ENCODE measurements at regions of chr2 and their contacts with region 1.

Region 1: GRCh38 chr2:11344342-11344955 is at the start of gene ROCK2:
- DNase-seq: peak; percentile 79
- ATAC-seq: peak; percentile 80
- H3K4me3 ChIP-seq: peak within 1 kb of the TSS; percentile 87
- H3K27ac ChIP-seq: peak within 1 kb of the TSS; percentile 98
- H3K4me1 ChIP-seq: peaks cover 5% of the 10 kb centered on the region; the same call in 1 of the 2 replicates
- H3K27me3 ChIP-seq: no peaks in the 10 kb centered on the region
- CTCF ChIP-seq: no peak
- POLR2A ChIP-seq: peak; percentile 60
- RAD21 ChIP-seq: no peak
- total RNA-seq, gene ROCK2: 28.3 and 59.7 TPM in 2 replicates

Region 2: GRCh38 chr2:11129598-11130449 is 214.6 kb before region 1 on chr2:
- CTCF ChIA-PET with region 1: interaction called, 10 read pairs
- POLR2A ChIA-PET with region 1: no interaction called
- dilution Hi-C with region 1: no loop called
- in situ Hi-C with region 1: no loop called
- intact Hi-C with region 1: loop called (anchors 2 kb)
- DNase-seq: no peak
- ATAC-seq: no peak
- H3K4me3 ChIP-seq: no peak overlapping the region
- H3K27ac ChIP-seq: no peak overlapping the region
- H3K4me1 ChIP-seq: peaks cover 14% of the 10 kb centered on the region
- H3K27me3 ChIP-seq: no peaks in the 10 kb centered on the region
- CTCF ChIP-seq: no peak
- POLR2A ChIP-seq: no peak
- RAD21 ChIP-seq: no peak

Region 3: DNA sequence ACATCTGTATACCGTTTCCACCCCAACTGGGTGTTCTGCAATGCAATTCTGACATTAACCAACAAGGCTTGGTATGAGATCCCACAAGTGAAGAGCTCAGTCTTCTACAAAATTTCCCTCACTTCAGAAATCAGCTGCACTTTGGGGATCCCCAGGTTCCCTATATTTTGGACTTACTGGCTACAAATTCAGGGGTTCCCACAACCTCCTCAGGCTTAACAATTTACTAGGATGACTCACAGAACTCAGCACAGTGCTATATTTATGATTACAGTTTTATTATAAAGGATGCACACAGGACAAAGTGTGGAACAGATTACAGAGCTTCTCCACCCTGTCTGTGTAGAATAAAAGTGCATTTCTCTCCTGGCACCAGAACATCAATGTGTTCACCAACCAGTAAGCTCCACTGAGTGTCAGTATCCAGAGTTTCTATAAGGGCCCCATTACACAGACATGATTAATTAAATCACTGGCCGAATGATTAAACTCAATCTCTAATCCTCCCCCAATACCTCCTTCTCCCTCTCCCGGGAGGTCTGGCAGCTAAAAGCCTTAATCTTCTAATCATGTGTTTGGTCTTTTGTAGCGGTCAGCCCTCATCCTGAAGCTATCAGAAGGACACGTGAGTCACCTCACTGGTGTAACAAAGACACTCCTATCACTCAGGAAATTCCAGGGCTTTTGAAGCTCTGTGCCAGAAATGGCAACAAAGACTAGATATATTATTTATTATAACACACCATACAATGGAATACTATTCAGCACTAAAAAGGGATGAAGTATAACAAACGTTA is 104.6 kb before region 1 on chr2:
- CTCF ChIA-PET with region 1: interaction called, 5 read pairs
- POLR2A ChIA-PET with region 1: no interaction called
- dilution Hi-C with region 1: no loop called
- in situ Hi-C with region 1: no loop called
- intact Hi-C with region 1: loop called (anchors 5 kb)
- DNase-seq: peak; percentile 25
- ATAC-seq: peak; percentile 56; the same call in 1 of the 2 replicates
- H3K4me3 ChIP-seq: no peak overlapping the region
- H3K27ac ChIP-seq: no peak overlapping the region
- H3K4me1 ChIP-seq: peaks cover 3% of the 10 kb centered on the region; the same call in 1 of the 2 replicates
- H3K27me3 ChIP-seq: no peaks in the 10 kb centered on the region
- CTCF ChIP-seq: no peak
- POLR2A ChIP-seq: no peak
- RAD21 ChIP-seq: no peak

Region 4: GRCh38 chr2:11305958-11306357 is 38.5 kb before region 1 on chr2:
- CTCF ChIA-PET with region 1: no interaction called
- POLR2A ChIA-PET with region 1: interaction called, 3 read pairs
- dilution Hi-C with region 1: no loop called
- in situ Hi-C with region 1: no loop called
- intact Hi-C with region 1: loop called (anchors 5 kb)
- DNase-seq: peak; percentile 92
- ATAC-seq: peak; percentile 95
- H3K4me3 ChIP-seq: no peak overlapping the region
- H3K27ac ChIP-seq: no peak overlapping the region
- H3K4me1 ChIP-seq: peaks cover 10% of the 10 kb centered on the region
- H3K27me3 ChIP-seq: no peaks in the 10 kb centered on the region
- CTCF ChIP-seq: no peak
- POLR2A ChIP-seq: no peak
- RAD21 ChIP-seq: no peak

Region 5: DNA sequence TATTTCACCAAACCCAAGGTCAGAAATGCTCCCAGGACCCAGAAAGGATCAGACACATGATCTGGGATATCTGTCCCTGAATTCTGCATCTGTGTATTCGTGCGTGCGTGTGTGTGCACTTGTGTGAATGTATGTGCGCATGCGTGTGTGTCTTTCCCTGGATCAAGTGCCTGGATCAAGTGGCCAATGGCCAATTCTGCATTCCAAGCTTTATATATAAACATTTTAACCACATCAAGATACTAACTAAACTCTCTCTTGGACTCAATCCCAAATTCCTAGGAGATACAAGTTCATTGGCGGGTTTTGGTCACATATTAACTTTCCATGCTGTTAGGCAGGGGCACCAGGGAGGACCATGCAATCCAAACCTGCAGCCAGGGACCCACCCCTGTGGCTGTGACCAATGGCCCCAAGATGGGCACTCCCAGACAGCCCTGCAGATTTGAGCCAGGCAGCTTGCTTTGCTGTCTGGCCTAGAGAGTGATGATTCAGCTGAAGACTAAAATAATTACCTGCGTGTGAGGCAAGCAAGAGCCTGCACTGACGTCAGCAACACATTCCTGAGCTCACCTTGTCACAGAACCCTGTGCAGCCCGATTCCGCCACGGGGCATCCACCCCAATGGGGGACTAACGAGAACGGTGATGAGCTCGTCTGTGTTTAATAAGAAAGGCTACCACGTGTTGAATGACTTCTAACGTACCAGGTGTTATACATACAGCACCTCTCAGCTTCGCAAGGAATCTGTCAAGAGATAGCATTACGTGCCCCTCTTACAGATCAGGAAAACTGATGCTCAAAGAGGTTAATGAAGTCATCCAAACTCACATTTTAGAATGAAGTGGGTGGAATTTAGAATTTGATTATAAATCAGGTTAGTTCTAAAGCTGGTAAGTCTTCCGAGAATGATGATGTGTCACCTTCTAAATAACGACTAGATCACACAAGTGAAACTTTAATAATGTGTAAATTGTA is 45.4 kb after region 1 on chr2:
- CTCF ChIA-PET with region 1: no interaction called
- POLR2A ChIA-PET with region 1: no interaction called
- dilution Hi-C with region 1: no loop called
- in situ Hi-C with region 1: no loop called
- intact Hi-C with region 1: loop called (anchors 1 kb)
- DNase-seq: peak; percentile 97
- ATAC-seq: peak; percentile 59
- H3K4me3 ChIP-seq: no peak overlapping the region
- H3K27ac ChIP-seq: peak overlapping the region; percentile 6; the same call in 1 of the 2 replicates
- H3K4me1 ChIP-seq: peaks cover 37% of the 10 kb centered on the region
- H3K27me3 ChIP-seq: no peaks in the 10 kb centered on the region
- CTCF ChIP-seq: no peak
- POLR2A ChIP-seq: no peak
- RAD21 ChIP-seq: no peak

Region 6: DNA sequence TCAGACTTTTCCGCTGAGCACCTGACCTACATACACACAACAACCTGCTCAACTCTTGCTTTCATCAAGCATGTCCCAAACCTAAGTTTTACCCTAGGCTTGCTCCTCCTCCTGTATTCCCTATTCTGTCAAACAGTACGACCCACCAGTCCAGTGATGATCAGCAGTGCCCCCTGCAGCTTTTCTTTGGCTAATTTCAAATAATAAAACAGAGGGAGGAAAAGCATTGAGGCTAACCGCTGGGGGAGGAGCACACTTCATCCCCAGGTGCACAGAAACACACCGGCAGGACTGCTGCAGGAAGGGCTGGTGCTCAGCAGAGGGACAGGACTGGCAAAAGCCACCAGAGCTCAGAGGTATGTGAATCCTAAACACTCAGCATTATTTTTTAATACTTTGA is 100.3 kb after region 1 on chr2:
- CTCF ChIA-PET with region 1: no interaction called
- POLR2A ChIA-PET with region 1: no interaction called
- dilution Hi-C with region 1: no loop called
- in situ Hi-C with region 1: no loop called
- intact Hi-C with region 1: no loop called
- DNase-seq: no peak
- ATAC-seq: no peak
- H3K4me3 ChIP-seq: no peak overlapping the region
- H3K27ac ChIP-seq: no peak overlapping the region
- H3K4me1 ChIP-seq: no peaks in the 10 kb centered on the region
- H3K27me3 ChIP-seq: no peaks in the 10 kb centered on the region
- CTCF ChIP-seq: 0 out of 2 replicates have a peak, but pooled peaks have one; percentile 5
- POLR2A ChIP-seq: no peak
- RAD21 ChIP-seq: 0 out of 2 replicates have a peak, but pooled peaks have one; percentile 17

Region 7: DNA sequence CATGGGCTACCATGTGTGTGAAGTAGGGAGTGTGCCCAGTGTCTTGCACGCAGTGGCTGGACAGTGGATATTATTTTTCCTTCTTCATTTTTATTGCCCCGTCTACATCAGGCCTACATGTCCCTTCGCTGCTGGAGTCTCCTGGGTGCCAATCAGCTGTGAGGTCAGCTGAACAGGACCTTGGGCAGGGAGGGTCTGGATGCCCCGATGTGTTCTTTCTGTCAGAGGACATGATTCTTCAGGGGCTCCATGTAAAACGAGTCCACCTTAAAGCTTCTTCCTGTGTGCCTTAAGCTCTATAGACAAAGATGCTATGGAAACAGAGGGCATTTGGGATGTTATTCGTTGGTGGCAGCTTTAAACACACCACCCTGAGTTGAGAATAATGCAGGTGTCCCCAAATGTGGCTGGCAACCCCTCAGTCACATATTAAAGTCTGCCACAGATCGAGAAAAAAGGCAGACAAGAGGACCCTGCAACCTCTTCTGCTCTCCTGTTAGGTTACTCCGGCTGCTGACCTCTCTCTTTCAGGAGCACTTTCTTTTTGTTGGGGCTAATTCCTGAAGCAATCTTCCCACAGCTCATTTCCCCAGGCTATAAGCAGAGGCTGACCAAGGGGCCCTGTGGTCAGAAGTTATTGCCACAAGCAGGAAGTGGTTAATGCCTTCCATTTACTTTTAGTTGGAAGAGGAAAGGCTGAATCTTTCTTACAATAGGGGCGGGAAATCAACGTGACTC is 209.4 kb after region 1 on chr2:
- CTCF ChIA-PET with region 1: no interaction called
- POLR2A ChIA-PET with region 1: no interaction called
- dilution Hi-C with region 1: no loop called
- in situ Hi-C with region 1: no loop called
- intact Hi-C with region 1: no loop called
- DNase-seq: peak; percentile 4
- ATAC-seq: no peak
- H3K4me3 ChIP-seq: no peak overlapping the region
- H3K27ac ChIP-seq: no peak overlapping the region
- H3K4me1 ChIP-seq: no peaks in the 10 kb centered on the region
- H3K27me3 ChIP-seq: peaks cover 45% of the 10 kb centered on the region
- CTCF ChIP-seq: no peak
- POLR2A ChIP-seq: no peak
- RAD21 ChIP-seq: no peak